Cardiac septum (tissue), 1 donor: ENCODE measurements at regions of chr9 and their contacts with region 1.

Region 1: GRCh38 chr9:129413537-129414376 is 207.1 kb downstream of the C9orf50 start:
- DNase-seq: peak; percentile 99

Region 2: GRCh38 chr9:129139993-129140396 is 273.8 kb before region 1 on chr9:
- intact Hi-C with region 1: loop called (anchors 1 kb)
- DNase-seq: peak; percentile 93

Region 3: GRCh38 chr9:129320575-129321263 is 93.0 kb before region 1 on chr9:
- intact Hi-C with region 1: loop called (anchors 5 kb)
- DNase-seq: peak; percentile 85

Region 4: GRCh38 chr9:129383561-129384416 is 30.0 kb before region 1 on chr9:
- intact Hi-C with region 1: loop called (anchors 2 kb)
- DNase-seq: peak; percentile 90

Region 5: GRCh38 chr9:129460323-129461261 is 46.8 kb after region 1 on chr9:
- intact Hi-C with region 1: loop called (anchors 2 kb)
- DNase-seq: peak; percentile 100

Region 6: GRCh38 chr9:129610473-129611301 is 196.9 kb after region 1 on chr9:
- intact Hi-C with region 1: loop called (anchors 5 kb)
- DNase-seq: peak; percentile 92